ENCODE measurements at regions of chr3 and their contacts with region 1.

Region 1: DNA sequence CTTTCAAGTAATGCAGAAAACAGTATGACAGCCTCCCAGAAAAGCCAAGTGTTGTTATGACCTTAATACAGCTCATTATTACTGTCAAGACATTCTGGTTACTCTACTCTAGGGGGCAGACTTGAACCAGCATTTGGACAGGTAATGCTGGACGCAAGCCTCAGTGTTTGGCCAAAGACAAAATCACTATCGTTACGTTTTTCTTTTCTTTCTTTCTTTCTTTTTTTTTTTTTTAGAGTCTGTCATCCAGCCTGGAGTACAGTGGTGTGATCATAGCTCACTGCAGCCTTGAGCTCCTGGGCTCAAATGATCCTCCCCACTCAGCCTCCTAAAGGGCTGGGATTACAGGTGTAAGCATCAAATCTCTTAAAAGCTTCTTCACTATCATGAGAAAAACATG is 29.4 kb upstream of the TMEM45A start:
- DNase-seq: peak; percentile 9
- H3K4me3 ChIP-seq: no peak overlapping the region
- H3K27me3 ChIP-seq: no peaks in the 10 kb centered on the region; the same call in 1 of the 2 replicates
- CTCF ChIP-seq: peak; percentile 71

Region 2: GRCh38 chr3:99909714-99910494 is 553.1 kb before region 1 on chr3:
- CTCF ChIA-PET with region 1: no interaction called
- POLR2A ChIA-PET with region 1: no interaction called
- DNase-seq: no peak
- H3K4me3 ChIP-seq: no peak overlapping the region
- H3K27me3 ChIP-seq: no peaks in the 10 kb centered on the region
- CTCF ChIP-seq: no peak

Region 3: GRCh38 chr3:100480111-100480510 is 17.1 kb after region 1 on chr3:
- CTCF ChIA-PET with region 1: interaction called, 10 read pairs
- POLR2A ChIA-PET with region 1: no interaction called
- DNase-seq: no peak
- H3K4me3 ChIP-seq: no peak overlapping the region
- H3K27me3 ChIP-seq: peaks cover 5% of the 10 kb centered on the region
- CTCF ChIP-seq: no peak

Region 4: GRCh38 chr3:100590114-100590839 is 127.3 kb after region 1 on chr3:
- CTCF ChIA-PET with region 1: interaction called, 311 read pairs
- POLR2A ChIA-PET with region 1: no interaction called
- DNase-seq: peak; percentile 21
- H3K4me3 ChIP-seq: no peak overlapping the region
- H3K27me3 ChIP-seq: no peaks in the 10 kb centered on the region; the same call in 1 of the 2 replicates
- CTCF ChIP-seq: peak; percentile 79

Region 5: DNA sequence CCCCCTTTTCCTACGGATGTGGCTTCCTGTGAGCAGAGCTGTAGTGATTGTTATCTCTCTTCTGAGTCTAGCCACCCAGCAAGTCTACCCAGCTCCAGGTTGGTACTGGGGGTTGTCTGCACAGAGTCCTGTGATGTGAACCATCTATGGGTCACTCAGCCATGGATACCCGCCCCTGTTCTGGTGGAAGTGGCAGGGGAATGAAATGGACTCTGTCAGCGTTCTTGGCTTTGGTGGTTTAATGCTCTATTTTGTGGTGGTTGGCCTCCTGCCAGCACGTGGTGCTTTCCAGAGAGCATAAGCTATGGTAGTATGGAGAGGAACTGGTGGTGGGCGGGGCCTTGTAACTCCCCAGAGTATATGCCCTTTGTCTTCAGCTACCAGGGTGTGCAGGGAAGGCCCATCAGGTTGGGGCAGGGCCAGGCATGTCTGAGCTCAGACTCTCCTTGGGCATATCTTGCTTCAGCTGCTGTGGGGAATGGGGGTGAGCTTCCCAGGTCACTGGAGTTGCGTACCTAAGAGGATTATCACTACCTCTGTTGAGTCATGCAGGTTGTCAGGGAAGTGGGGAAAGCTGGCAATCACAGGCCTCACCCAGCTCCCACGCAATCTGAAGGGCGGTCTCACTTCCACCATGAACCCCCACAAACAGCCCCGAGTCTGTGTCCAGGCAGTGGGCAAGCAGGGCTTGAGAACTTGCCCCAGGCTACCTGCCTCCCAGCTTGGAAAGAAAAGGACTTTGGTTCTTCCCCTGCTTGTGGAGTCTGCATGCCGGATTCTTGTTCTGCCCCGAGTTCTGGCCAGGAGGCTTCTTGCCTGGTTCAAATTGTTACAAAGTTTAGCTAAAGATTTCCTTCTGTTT is 137.4 kb after region 1 on chr3:
- CTCF ChIA-PET with region 1: interaction called, 11 read pairs
- POLR2A ChIA-PET with region 1: no interaction called
- DNase-seq: no peak
- H3K4me3 ChIP-seq: no peak overlapping the region
- H3K27me3 ChIP-seq: peaks cover 1% of the 10 kb centered on the region; the same call in 1 of the 2 replicates
- CTCF ChIP-seq: no peak

Measured in BJ (cell line).